AG04449 (cell line): ENCODE measurements at regions of chr11 and their contacts with region 1.

Region 1: GRCh38 chr11:66311965-66312548 is 4.8 kb downstream of the CD248 start:
- DNase-seq: no peak
- H3K4me3 ChIP-seq: peak overlapping the region; percentile 63
- CTCF ChIP-seq: peak; percentile 90

Region 2: DNA sequence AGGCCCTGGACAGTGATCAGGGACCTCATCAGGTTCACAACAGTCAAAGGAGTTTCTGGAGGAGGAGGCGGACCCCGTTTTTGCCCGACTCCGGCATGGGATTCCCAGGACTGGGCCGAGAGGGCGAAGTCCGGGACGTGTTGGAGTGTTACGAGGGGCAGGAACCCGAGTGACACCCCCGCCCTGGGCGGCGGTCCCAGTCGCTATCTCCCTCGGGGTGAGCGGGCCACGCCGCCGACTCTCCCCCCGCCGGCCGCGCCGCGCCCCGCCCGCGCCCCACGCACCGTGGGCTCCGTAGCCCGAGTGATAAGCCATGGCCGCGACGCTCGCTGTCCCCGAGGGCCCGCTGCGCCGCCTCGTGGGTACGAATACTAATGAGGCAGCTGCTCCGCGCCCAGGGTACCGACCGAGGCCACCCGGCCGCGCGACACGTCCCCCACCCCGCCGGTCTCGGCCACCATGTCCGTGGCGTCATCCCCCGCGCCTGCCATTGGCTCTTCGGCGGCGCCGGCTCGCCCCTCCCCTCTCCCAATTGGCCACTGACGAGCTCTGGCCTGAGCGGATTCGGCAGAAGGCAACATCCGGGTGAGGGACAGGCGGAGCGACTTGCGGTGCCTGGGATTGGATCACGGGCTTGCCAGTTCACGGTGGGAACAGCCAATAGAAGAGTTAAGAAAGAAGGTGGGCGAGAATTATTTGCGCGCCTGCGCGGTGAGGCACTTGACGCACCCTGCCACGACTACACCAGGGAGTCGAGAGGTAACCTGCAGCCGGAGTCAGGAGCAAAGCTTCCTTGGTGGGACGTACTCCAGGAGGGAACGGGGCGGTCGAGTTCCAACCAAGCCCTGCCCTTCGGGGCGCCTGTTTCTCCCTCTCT is 23.1 kb before region 1 on chr11 and contains the start of gene YIF1A:
- CTCF ChIA-PET with region 1: interaction called, 109 read pairs
- POLR2A ChIA-PET with region 1: interaction called, 21 read pairs
- DNase-seq: peak; percentile 98
- H3K4me3 ChIP-seq: peak within 1 kb of the TSS; percentile 82
- CTCF ChIP-seq: no peak

Region 3: DNA sequence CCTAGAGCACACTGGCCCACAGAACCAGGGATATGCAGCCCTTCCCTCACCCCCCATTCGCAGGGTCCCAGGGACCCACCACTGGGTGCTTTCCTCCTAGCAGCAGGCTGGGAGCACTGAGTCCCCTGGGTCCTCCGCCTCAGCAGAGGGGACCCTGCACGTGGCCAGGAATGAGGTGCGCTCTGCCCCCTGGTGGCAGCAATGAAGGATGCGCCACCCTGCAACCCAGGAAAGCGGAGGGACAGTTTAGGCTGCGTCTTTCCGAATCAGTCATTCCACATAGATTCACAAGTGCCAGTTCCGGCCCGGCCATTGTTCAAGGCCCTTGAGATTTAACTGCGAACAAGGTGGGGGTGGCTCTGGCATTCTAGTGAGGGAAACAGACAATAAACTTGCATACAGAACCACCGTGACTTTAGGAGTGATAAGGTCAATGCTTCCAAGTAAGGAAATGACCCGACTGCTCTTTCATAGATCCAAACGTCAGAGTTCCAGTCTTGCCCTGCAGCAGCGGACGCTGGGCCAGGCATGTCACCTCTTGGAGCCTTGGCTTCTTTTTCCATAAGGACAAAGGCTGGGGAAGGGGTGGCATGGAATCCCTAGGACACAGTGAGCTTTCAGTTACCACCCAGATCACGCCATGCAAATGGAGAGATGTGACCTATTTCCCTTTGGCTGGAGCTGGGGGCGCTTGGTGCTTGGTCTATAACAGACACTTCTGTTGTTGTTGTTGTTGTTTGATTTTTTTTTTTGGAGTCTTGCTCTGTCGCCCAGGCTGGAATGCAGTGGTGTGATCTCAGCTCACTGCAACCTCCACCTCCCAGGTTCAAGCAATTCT is 16.5 kb after region 1 on chr11:
- CTCF ChIA-PET with region 1: interaction called, 231 read pairs
- POLR2A ChIA-PET with region 1: interaction called, 106 read pairs
- DNase-seq: no peak
- H3K4me3 ChIP-seq: no peak overlapping the region
- CTCF ChIP-seq: peak; percentile 91

Region 4: GRCh38 chr11:66344550-66345315 is 32.7 kb after region 1 on chr11 and contains the start of gene BRMS1:
- CTCF ChIA-PET with region 1: interaction called, 129 read pairs
- POLR2A ChIA-PET with region 1: interaction called, 15 read pairs
- DNase-seq: peak; percentile 79
- H3K4me3 ChIP-seq: peak within 1 kb of the TSS; percentile 99
- CTCF ChIP-seq: no peak

Region 5: DNA sequence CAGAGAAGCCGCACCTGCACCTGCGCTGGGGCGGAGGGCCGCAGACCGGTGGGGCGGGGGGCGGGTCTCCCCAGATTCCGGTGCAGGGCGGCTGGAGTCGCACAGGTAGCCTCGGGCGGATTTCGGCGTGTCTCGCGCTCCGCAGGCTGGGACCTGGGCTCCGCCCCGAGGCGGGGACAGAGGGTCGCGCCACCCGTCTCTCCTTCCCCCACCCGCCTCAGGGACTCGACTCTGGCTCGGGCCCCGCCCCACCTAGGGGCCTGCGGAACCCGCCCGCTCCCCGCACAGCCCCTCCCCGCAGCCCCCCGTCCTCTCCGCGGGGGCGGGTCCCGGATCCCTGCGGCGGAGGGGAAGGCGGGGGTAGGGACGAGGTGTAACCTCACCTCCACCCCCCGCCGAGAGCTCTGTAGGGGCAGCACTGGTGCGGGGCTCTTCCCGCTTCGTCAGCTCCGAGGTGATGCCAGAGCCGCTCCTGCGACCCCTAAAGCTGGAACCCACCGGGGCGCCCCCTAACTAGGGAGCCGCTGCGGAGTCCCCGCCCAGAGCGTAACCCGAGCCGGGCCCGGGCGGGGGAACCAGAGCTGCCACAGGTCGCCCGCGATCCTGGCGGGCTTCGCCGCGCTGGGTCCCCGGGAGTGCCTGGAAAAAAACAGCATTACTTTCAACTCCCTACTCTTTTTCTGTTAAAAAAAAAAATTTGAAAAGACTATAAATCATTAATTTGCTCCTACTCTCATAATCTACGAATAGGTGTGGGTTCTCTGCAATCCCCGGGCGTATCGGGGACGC is 59.8 kb after region 1 on chr11 and contains the start of gene SLC29A2:
- CTCF ChIA-PET with region 1: interaction called, 12 read pairs
- POLR2A ChIA-PET with region 1: interaction called, 5 read pairs
- DNase-seq: no peak
- H3K4me3 ChIP-seq: peak within 1 kb of the TSS; percentile 61
- CTCF ChIP-seq: no peak

Region 6: DNA sequence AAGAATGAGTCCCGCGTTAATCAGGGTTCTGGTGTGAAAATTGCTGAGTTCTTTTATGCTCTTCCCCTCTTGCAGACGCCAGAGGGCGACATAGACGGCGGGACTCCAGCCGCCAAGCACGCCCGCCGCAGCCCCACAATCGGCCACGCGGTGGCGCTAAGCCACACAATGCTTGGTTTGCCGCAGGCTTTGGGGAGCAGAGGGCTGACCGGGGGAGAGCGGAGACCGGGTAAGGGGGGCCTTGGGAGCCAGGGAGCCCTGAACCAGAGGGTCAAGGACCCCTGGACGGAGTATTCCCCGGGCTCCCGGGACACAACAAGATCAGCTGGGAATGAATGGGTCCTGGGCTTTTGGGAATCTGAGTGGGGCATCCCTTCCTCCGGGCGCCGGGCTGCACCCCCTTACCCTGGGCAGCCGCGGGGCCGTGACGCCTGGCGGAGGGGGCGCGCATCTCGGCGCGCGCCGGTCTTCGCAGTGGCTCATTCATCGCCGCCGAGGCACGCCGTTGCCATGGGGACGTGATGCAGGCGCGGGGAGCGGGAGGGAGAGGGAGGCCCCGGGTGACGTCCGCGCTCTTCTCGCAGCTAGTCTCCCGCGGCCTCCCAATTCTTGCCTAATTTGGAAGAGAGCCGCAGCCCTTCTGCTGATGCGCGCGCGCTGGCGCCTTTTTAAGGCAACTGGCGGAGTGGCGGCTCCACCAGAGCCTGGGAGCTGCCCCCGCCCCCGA is 96.6 kb after region 1 on chr11:
- CTCF ChIA-PET with region 1: interaction called, 21 read pairs
- POLR2A ChIA-PET with region 1: interaction called, 3 read pairs
- DNase-seq: peak; percentile 61
- H3K4me3 ChIP-seq: peak overlapping the region; percentile 59
- CTCF ChIP-seq: peak; percentile 100